Activated naive CD4-positive, alpha-beta T cell treated with anti-CD3 and anti-CD28 coated beads for 36 hours (primary cell): ENCODE measurements at regions of chr15 and their contacts with region 1.

Region 1: GRCh38 chr15:80776420-80777045 is 2.6 kb upstream of the CEMIP start:
- DNase-seq: peak; percentile 85
- H3K4me3 Mint-ChIP-seq: no peak overlapping the region
- H3K27ac Mint-ChIP-seq: no peak overlapping the region
- H3K4me1 Mint-ChIP-seq: peaks cover 12% of the 10 kb centered on the region
- H3K27me3 Mint-ChIP-seq: peaks cover 22% of the 10 kb centered on the region

Region 2: GRCh38 chr15:80475572-80475971 is 301.0 kb before region 1 on chr15:
- CTCF ChIA-PET with region 1: interaction called, 10 read pairs
- intact Hi-C with region 1: no loop called
- DNase-seq: no peak
- H3K4me3 Mint-ChIP-seq: no peak overlapping the region
- H3K27ac Mint-ChIP-seq: no peak overlapping the region
- H3K4me1 Mint-ChIP-seq: no peaks in the 10 kb centered on the region
- H3K27me3 Mint-ChIP-seq: peaks cover 13% of the 10 kb centered on the region

Region 3: GRCh38 chr15:80567721-80568157 is 208.8 kb before region 1 on chr15:
- CTCF ChIA-PET with region 1: interaction called, 34 read pairs
- intact Hi-C with region 1: loop called (anchors 1 kb)
- DNase-seq: peak; percentile 46
- H3K4me3 Mint-ChIP-seq: no peak overlapping the region
- H3K27ac Mint-ChIP-seq: no peak overlapping the region
- H3K4me1 Mint-ChIP-seq: no peaks in the 10 kb centered on the region
- H3K27me3 Mint-ChIP-seq: peaks cover 12% of the 10 kb centered on the region

Region 4: GRCh38 chr15:80588801-80589200 is 187.7 kb before region 1 on chr15:
- CTCF ChIA-PET with region 1: no interaction called
- intact Hi-C with region 1: loop called (anchors 5 kb)
- DNase-seq: no peak
- H3K4me3 Mint-ChIP-seq: no peak overlapping the region
- H3K27ac Mint-ChIP-seq: no peak overlapping the region
- H3K4me1 Mint-ChIP-seq: no peaks in the 10 kb centered on the region
- H3K27me3 Mint-ChIP-seq: peaks cover 4% of the 10 kb centered on the region

Region 5: DNA sequence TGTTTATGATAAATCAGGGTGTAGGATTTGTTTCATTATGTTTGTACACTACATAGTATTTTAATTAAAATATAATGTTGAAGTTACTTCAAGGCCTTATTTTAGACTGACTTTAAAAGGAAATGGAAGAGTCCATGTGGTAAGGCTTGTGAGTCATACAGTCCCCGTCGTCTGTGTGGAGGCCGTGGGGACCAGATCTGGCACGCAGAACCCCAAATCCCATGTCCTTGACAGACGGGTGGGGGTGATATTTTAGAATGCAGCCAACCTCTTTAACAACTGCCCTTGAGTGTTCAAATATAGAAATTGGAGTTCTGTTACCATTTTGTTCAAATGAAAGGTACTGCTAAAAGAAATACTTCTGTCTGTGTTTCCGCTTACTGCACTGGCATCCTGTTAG is 45.6 kb before region 1 on chr15:
- CTCF ChIA-PET with region 1: no interaction called
- intact Hi-C with region 1: no loop called
- DNase-seq: no peak
- H3K4me3 Mint-ChIP-seq: no peak overlapping the region
- H3K27ac Mint-ChIP-seq: no peak overlapping the region
- H3K4me1 Mint-ChIP-seq: no peaks in the 10 kb centered on the region
- H3K27me3 Mint-ChIP-seq: no peaks in the 10 kb centered on the region

Region 6: DNA sequence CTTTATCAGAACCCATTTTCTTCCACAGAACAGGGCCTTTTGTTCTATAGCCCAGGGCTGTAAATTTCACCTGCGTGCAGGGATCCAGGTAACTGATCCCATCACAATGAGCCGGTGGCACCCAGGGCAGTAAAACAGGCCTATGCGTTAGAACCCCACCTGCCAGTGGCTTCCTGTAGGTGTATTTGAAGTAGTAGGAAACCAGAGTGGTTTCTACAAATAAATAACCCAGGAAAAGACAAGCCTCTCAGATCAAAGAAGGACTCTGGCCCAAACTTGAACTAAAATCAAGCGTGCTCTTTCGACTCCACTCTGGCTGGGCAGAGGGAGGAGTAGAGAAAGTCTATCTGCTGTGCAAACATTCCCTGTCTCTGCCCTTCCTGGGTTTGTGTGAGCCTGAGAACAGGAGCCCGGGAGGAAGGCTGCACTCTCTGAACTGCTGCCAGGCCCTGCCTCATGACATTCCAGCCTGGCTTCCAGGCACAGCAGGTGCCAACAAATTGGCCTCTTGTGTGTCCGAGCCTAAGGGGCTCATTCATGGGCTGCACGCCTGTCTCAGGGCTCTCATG is 80.4 kb after region 1 on chr15:
- CTCF ChIA-PET with region 1: interaction called, 4 read pairs
- intact Hi-C with region 1: loop called (anchors 10 kb)
- DNase-seq: no peak
- H3K4me3 Mint-ChIP-seq: no peak overlapping the region
- H3K27ac Mint-ChIP-seq: no peak overlapping the region
- H3K4me1 Mint-ChIP-seq: peaks cover 22% of the 10 kb centered on the region
- H3K27me3 Mint-ChIP-seq: no peaks in the 10 kb centered on the region

Region 7: GRCh38 chr15:80970018-80970658 is 193.6 kb after region 1 on chr15:
- CTCF ChIA-PET with region 1: interaction called, 8 read pairs
- intact Hi-C with region 1: loop called (anchors 1 kb)
- DNase-seq: peak; percentile 76
- H3K4me3 Mint-ChIP-seq: no peak overlapping the region
- H3K27ac Mint-ChIP-seq: no peak overlapping the region
- H3K4me1 Mint-ChIP-seq: peaks cover 8% of the 10 kb centered on the region
- H3K27me3 Mint-ChIP-seq: no peaks in the 10 kb centered on the region

Region 8: DNA sequence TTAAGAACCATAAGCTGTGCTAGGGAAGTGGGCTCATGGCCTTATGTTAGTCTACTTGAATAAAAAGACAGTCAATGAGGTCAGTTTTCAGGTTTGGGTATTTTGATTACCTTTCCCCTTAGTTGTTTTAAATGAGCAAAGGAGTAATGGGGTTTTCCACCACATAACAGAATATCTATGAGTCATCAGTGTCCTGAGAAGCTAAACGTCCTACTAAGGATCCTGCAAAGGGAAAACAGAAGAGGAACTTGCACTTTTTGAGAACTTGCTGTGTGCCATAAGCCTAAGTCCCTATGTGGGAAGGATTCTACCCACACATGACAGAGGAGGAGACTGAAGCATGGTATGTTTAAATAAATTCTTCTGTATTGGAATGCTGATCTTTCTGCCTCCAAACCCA is 890.3 kb after region 1 on chr15:
- CTCF ChIA-PET with region 1: no interaction called
- intact Hi-C with region 1: no loop called
- DNase-seq: no peak
- H3K4me3 Mint-ChIP-seq: no peak overlapping the region
- H3K27ac Mint-ChIP-seq: no peak overlapping the region
- H3K4me1 Mint-ChIP-seq: no peaks in the 10 kb centered on the region
- H3K27me3 Mint-ChIP-seq: no peaks in the 10 kb centered on the region